Psoas muscle (tissue), 8 donors: ENCODE measurements at regions of chr1 and their contacts with region 1.

Region 1: GRCh38 chr1:203117611-203118575 is 9.6 kb upstream of the ADORA1 start:
- DNase-seq: peak; percentile 83 to 90
- ATAC-seq: peak; percentile 93 to 98 (median 93)
- H3K4me3 ChIP-seq: peak overlapping the region; percentile 31
- H3K27ac ChIP-seq: peak overlapping the region; percentile 3
- H3K4me1 ChIP-seq: peaks cover 24% of the 10 kb centered on the region
- H3K27me3 ChIP-seq: peaks cover 0 to 24% (median 0%) of the 10 kb centered on the region in 3 donors
- CTCF ChIP-seq: peak; percentile 80

Region 2: DNA sequence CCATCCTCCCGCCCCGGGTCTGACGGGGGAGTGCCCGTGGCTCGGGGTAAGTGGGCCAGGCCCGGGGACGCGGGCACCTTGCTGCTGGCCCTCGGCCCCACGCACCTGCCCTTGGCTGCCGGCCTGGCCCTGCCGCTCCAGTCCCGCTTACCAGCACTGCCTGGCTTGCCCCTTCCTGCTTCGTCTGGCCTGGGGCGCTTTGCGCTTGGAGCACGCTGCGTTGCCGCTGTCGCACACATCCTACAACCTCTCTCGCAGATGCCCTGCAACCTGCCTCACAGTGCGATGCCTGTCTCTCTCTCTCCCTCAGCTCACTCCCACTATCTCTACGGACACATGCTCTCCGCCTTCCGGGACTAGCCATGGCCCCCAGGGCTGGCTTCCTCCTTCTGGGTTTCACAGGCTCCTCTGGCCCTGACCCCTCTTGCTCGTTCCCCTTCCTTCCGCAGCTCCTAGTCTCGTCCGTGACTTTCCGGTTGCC is 41.8 kb before region 1 on chr1:
- intact Hi-C with region 1: no loop called
- DNase-seq: peak in 1 of 2 donors; percentile 59
- ATAC-seq: peak; percentile 5 to 8 (median 7)
- H3K4me3 ChIP-seq: peak overlapping the region; percentile 51
- H3K27ac ChIP-seq: peak overlapping the region; percentile 23
- H3K4me1 ChIP-seq: peaks cover 33% of the 10 kb centered on the region
- H3K27me3 ChIP-seq: no peaks in the 10 kb centered on the region
- CTCF ChIP-seq: no peak

Region 3: GRCh38 chr1:203216274-203217138 is 98.6 kb after region 1 on chr1:
- intact Hi-C with region 1: loop called (anchors 1 to 2 kb)
- DNase-seq: peak in 1 of 2 donors; percentile 41
- ATAC-seq: peak; percentile 78 to 94 (median 84)
- H3K4me3 ChIP-seq: no peak overlapping the region
- H3K27ac ChIP-seq: no peak overlapping the region
- H3K4me1 ChIP-seq: peaks cover 12% of the 10 kb centered on the region
- H3K27me3 ChIP-seq: no peaks in the 10 kb centered on the region
- CTCF ChIP-seq: peak; percentile 83

Region 4: DNA sequence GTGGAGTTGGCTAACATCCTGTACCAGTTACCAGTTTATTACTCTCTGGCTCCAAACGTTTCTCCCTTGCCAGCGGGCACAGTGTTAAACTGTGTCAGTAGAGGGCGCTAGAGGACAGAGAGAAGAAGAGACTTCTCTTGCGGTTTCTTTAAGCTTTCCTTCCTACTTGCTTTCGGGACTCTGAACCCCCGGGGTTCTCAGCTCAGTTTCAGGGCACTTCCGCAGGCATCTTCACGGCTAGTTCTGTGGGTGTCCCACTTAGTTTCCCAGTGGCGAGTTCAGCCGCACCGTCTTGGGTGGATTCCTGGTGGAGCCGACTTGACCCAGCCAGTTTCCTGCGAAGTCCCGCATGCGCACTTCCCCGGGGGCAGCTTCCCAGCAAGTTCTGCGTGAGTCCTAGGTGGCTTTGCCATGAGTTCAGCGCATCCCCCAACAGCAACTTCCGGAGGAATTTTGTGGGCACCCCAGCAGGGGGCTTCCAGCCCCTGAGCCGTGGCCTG is 149.5 kb after region 1 on chr1:
- intact Hi-C with region 1: loop called in 1 of 2 experiments (anchors 5 kb)
- DNase-seq: peak; percentile 85 to 91
- ATAC-seq: peak; percentile 75 to 85 (median 80)
- H3K4me3 ChIP-seq: peak overlapping the region; percentile 73
- H3K27ac ChIP-seq: peak overlapping the region; percentile 93
- H3K4me1 ChIP-seq: peaks cover 30% of the 10 kb centered on the region
- H3K27me3 ChIP-seq: no peaks in the 10 kb centered on the region
- CTCF ChIP-seq: peak; percentile 92